ENCODE measurements at regions of chr15 and their contacts with region 1.

Region 1: GRCh38 chr15:72199711-72200212 is 2.2 kb upstream of the GRAMD2A start:
- H3K4me3 ChIP-seq: no peak overlapping the region
- H3K27ac ChIP-seq: peak overlapping the region; percentile 39; the same call in 1 of the 2 replicates
- H3K4me1 ChIP-seq: no peaks in the 10 kb centered on the region; the same call in 1 of the 2 replicates
- CTCF ChIP-seq: peak; percentile 98

Region 2: DNA sequence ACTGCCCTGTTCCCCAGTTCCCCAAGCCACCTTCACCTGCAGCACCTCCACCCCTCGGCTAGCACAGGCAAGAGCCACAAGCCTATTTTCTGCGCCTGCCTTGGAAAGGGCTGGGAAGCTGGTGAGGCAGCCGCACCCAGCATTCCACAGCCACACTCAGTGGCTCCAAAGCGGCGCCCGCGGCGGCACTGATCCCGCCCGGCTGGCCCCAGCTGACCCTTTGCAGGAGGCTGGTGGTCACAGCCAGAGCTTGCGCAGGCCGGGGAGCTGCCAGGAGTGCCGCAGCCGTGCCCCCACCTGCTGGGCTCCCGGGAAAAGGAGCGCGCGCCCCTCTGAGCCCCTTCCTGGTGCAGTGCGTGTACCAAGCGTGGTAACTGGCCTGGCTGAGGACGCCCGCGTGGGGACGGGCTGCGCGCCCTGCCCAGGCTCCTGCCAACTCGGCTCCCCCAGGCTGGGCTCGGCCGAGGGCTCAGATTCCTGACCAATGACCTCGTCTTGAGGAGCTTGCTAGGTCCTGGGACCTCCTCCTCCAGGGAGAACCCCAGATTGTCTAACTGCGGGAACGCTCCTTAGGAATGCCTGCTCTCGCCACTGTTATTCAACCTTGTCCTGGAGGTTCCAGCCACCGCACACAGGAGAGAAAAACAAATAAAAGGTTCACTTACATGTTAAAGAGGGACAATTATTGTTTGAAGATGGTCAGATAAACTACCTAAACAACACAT is 15.4 kb before region 1 on chr15:
- CTCF ChIA-PET with region 1: interaction called, 10 read pairs
- POLR2A ChIA-PET with region 1: no interaction called
- H3K4me3 ChIP-seq: peak overlapping the region; percentile 9
- H3K27ac ChIP-seq: peak overlapping the region; percentile 31; the same call in 1 of the 2 replicates
- H3K4me1 ChIP-seq: peaks cover 6% of the 10 kb centered on the region; the same call in 1 of the 2 replicates
- CTCF ChIP-seq: no peak

Region 3: GRCh38 chr15:72222259-72222832 is 22.6 kb after region 1 on chr15:
- CTCF ChIA-PET with region 1: interaction called, 35 read pairs
- POLR2A ChIA-PET with region 1: interaction called, 12 read pairs
- H3K4me3 ChIP-seq: no peak overlapping the region
- H3K27ac ChIP-seq: 0 out of 2 replicates have a peak overlapping the region, but pooled peaks have one; percentile 21
- H3K4me1 ChIP-seq: peaks cover 29% of the 10 kb centered on the region; the same call in 1 of the 2 replicates
- CTCF ChIP-seq: no peak

Region 4: DNA sequence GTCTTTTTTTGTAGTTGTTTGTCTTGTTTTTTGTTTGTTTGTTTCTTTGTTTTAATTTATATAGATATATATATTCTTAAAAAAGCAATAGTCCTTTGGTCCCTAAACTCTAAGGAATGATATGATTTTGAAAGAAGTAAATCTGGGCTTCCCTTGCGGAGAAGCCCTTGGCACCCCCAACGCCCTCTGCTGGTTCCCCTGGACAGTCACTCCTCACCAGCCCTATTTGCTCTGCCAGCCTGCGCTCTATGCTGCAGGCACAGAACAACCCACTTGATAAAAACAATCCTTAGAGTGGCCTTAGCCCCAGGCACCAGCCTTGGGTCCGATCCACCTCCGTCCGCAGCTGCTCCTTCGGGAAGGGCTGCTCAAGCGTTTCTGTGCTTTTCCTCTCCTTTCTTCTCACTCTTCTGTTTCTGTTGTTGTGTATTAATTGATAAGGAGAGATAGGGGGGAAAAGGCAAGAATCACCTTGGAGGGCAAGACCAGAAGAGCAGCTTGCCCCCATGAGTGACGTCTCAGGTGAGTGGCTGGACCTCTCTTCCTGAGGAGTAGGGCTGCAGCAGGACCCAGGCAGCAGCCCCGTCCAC is 86.3 kb after region 1 on chr15:
- CTCF ChIA-PET with region 1: interaction called, 20 read pairs
- POLR2A ChIA-PET with region 1: no interaction called
- H3K4me3 ChIP-seq: no peak overlapping the region
- H3K27ac ChIP-seq: no peak overlapping the region
- H3K4me1 ChIP-seq: no peaks in the 10 kb centered on the region
- CTCF ChIP-seq: peak; percentile 37; the same call in 1 of the 2 replicates

Measured in HEK293 (cell line).